Activated CD8-positive, alpha-beta memory T cell treated with anti-CD3 and anti-CD28 coated beads, Interleukin-2, amount 10 ng/mL, durations not matched to agents 7 days and 5 days (primary cell): ENCODE measurements at regions of chr20 and their contacts with region 1.

Region 1: DNA sequence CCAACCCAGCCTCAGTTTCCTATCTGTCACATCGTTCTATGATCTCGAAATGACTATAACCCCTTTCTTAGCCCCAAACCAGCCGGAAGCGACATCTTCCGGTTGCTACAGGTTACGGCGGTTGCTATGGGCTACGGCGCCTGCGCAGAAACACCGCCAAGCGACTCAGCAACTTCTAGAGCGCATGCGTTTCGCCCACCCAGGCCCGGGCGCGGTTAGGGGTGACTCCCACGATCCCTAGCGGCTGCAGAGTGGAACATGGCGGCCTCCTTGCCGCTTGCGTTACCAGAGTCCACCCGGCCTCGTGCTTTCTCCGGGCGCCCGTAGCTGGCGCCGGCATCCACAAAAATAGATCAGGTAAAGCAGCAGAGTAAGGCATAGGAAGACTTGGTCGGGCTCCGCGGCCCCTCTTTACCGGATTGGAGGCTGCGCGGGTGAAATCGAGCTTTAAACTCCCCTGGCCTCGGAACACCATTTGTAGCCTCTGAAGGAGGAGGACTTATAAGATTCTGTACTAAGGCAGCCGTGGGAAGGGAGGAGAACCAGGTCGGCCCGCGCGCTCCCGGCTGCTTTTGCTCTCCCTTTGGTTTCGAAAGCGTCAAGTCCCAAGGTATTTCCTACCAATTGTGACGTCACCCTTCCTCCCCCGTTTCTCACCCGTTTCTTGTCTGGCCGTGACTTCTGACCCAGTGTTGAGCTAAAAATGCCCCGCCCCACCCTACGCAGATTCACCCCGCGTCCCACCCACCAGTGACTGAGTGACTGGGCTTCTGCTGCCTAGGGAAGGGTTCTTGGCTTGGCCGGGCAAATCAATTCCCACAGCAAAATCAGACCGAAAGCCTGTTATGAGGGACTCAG is 3.5 kb downstream of the SDCBP2 start:
- DNase-seq: peak; percentile 99
- ATAC-seq: peak; percentile 87
- H3K4me3 Mint-ChIP-seq: no peak overlapping the region
- H3K27ac Mint-ChIP-seq: no peak overlapping the region
- H3K4me1 Mint-ChIP-seq: peaks cover 19% of the 10 kb centered on the region
- H3K27me3 Mint-ChIP-seq: no peaks in the 10 kb centered on the region

Region 2: DNA sequence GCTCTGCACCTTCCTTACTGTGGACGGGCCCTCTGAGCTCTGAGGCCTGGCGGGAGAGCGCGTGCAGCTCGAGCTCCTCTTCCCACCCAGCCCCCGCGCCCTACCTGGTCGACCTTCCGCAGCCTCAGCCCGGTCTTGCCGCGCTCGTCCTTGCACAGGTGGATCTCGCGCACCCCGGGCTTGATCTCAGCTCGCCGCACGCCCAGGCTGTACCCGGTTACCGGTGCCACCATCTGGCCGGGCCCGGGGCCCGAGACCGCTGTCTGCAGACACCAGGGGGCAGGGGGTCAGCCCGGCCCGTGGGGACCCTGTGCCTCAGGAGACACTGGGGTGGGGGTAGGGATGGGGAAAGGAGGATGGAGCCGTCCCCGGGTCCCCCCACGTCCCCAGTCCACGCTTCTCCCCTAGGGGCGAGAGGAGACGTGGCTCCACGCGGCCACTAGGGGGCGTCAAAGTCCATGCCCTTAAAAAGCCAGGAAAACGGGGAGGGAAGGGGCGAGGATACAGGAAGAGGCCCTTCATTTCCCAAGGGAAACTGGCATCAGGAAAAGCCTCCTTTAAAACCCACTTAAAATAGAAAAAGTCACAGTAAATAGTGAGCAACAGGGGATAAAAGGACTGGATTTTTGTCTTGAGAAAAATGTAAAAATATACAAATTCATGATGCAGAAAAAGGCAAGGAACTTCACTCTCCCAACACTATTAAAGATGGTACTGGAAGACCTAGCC is 12.0 kb before region 1 on chr20:
- CTCF ChIA-PET with region 1: interaction called, 10 read pairs
- DNase-seq: peak; percentile 63
- ATAC-seq: peak; percentile 56
- H3K4me3 Mint-ChIP-seq: no peak overlapping the region
- H3K27ac Mint-ChIP-seq: no peak overlapping the region
- H3K4me1 Mint-ChIP-seq: peaks cover 19% of the 10 kb centered on the region
- H3K27me3 Mint-ChIP-seq: peaks cover 4% of the 10 kb centered on the region

Region 3: GRCh38 chr20:1513801-1514200 is 188.4 kb after region 1 on chr20:
- CTCF ChIA-PET with region 1: no interaction called
- DNase-seq: no peak
- ATAC-seq: no peak
- H3K4me3 Mint-ChIP-seq: no peak overlapping the region
- H3K27ac Mint-ChIP-seq: no peak overlapping the region
- H3K4me1 Mint-ChIP-seq: no peaks in the 10 kb centered on the region
- H3K27me3 Mint-ChIP-seq: peaks cover 18% of the 10 kb centered on the region